ENCODE measurements at regions of chr17 and their contacts with region 1.

Region 1: DNA sequence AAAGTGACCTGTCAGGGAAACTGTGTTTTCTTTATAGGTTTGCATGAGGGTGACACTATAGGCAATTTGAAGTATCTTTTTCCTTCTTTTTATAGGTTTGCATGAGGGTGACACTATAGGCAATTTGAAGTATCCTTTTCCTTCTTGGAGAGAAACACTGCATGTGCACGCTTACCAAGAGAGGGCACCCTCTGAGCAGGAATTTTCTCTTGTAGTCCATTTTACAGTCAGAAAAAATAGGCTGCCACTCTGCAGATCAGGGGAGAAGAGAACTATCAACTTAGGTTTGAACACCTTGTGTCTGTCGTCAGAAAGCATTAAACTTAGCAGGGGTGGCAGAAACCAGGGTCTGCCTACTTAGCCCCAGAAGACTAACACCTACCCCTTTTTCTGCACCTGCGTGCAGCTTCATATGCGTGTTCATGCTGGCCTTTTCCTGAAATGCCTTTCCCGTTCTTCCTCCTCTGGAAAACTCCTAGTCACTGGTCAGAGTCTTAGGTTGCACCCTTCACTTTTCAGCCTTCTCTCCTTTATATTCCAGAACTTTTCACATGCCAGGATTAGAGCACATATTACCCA is 16.4 kb upstream of the SMIM36 start:
- DNase-seq: peak; percentile 71
- H3K4me3 ChIP-seq: no peak overlapping the region
- H3K27ac ChIP-seq: no peak overlapping the region
- H3K4me1 ChIP-seq: no peaks in the 10 kb centered on the region
- H3K27me3 ChIP-seq: peaks cover 0 to 3% of the 10 kb centered on the region in 2 experiments
- CTCF ChIP-seq: peak; percentile 48 to 69
- POLR2A ChIP-seq: no peak

Region 2: DNA sequence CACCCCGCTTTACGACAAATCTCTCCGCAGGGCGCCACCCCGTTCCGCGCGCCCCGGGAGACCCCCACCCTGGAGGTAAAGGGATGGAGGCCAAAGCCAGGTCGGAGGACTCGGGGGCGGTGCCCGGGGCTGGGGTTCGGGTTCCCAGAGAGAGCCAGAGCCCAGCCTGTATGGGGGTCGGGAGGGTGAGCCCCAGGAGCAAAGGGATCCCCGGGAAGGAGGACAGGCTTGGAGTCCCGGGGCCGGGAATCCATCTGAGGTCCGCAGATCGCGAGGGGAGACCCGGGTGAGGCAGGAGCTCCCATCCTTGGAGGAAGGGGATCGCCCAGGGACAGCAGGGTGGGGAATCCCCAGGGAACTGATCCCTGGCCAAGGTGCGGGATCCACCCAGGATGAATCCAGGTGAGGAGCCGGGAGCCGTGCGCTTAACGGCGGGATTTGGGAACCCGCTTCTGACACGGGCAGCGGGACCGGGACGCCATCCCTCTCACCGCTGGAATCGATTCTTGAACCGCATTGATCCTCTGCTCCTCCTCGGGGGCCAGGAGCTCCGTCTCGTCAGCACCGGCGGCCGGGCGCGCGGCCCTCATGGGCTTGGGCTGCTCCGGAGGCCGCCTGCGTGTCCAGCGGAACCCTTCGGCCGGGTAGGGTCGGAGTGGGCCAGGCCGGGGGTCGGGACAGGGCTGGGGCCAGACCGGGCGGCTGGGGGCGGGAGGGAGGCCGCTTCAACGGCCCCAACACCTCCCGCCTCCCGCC is 106.3 kb before region 1 on chr17 and contains the start of gene MMD:
- CTCF ChIA-PET with region 1: no interaction called
- POLR2A ChIA-PET with region 1: no interaction called
- dilution Hi-C with region 1: no loop called
- intact Hi-C with region 1: no loop called
- DNase-seq: no peak
- H3K4me3 ChIP-seq: peak within 1 kb of the TSS; percentile 89 to 97 (median 92)
- H3K27ac ChIP-seq: peak within 1 kb of the TSS; percentile 61
- H3K4me1 ChIP-seq: peaks cover 13% of the 10 kb centered on the region
- H3K27me3 ChIP-seq: peaks cover 8 to 28% of the 10 kb centered on the region in 2 experiments
- CTCF ChIP-seq: no peak
- POLR2A ChIP-seq: no peak
- total RNA-seq, gene MMD: 9.3 TPM in 2 replicates

Region 3: GRCh38 chr17:55641676-55642081 is 114.0 kb after region 1 on chr17:
- CTCF ChIA-PET with region 1: interaction called, 67 read pairs
- POLR2A ChIA-PET with region 1: no interaction called
- dilution Hi-C with region 1: no loop called
- intact Hi-C with region 1: loop called (anchors 1 kb)
- DNase-seq: peak; percentile 77
- H3K4me3 ChIP-seq: no peak overlapping the region
- H3K27ac ChIP-seq: no peak overlapping the region
- H3K4me1 ChIP-seq: no peaks in the 10 kb centered on the region
- H3K27me3 ChIP-seq: peaks cover 0 to 3% of the 10 kb centered on the region in 2 experiments
- CTCF ChIP-seq: peak; percentile 56 to 80
- POLR2A ChIP-seq: no peak

Region 4: GRCh38 chr17:55717898-55718735 is 190.5 kb after region 1 on chr17:
- CTCF ChIA-PET with region 1: interaction called, 24 read pairs
- POLR2A ChIA-PET with region 1: no interaction called
- dilution Hi-C with region 1: no loop called
- intact Hi-C with region 1: loop called (anchors 1 kb)
- DNase-seq: peak; percentile 72
- H3K4me3 ChIP-seq: no peak overlapping the region
- H3K27ac ChIP-seq: no peak overlapping the region
- H3K4me1 ChIP-seq: peaks cover 2% of the 10 kb centered on the region
- H3K27me3 ChIP-seq: peaks cover 0 to 4% of the 10 kb centered on the region in 2 experiments
- CTCF ChIP-seq: peak; percentile 60 to 66
- POLR2A ChIP-seq: no peak

Region 5: GRCh38 chr17:55735731-55736405 is 208.2 kb after region 1 on chr17:
- CTCF ChIA-PET with region 1: interaction called, 23 read pairs
- POLR2A ChIA-PET with region 1: no interaction called
- dilution Hi-C with region 1: no loop called
- intact Hi-C with region 1: no loop called
- DNase-seq: peak; percentile 32
- H3K4me3 ChIP-seq: no peak overlapping the region
- H3K27ac ChIP-seq: no peak overlapping the region
- H3K4me1 ChIP-seq: no peaks in the 10 kb centered on the region
- H3K27me3 ChIP-seq: no peaks in the 10 kb centered on the region
- CTCF ChIP-seq: peak; percentile 44 to 54
- POLR2A ChIP-seq: no peak

Region 6: DNA sequence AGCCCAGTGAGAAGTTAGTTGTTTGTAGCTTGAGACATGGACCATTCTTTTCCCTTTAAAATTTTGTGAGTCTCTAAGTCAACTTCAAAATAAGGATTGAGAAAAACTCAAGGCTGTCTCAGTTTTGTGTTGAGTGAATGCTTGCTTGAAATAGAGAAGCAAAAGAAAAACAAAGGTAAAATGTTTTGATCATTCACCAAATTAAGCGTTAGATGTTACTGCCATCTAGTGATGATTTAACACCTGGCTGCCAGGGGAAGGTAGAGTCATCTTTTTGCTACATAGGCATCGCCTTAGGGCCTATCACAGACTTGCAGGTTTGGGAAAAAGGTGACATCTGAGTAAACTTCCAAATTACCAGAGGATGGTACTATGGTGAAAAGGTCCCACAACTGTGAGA is 297.6 kb after region 1 on chr17:
- CTCF ChIA-PET with region 1: no interaction called
- POLR2A ChIA-PET with region 1: no interaction called
- dilution Hi-C with region 1: no loop called
- intact Hi-C with region 1: loop called (anchors 1 kb)
- DNase-seq: peak; percentile 8
- H3K4me3 ChIP-seq: no peak overlapping the region
- H3K27ac ChIP-seq: no peak overlapping the region
- H3K4me1 ChIP-seq: no peaks in the 10 kb centered on the region
- H3K27me3 ChIP-seq: no peaks in the 10 kb centered on the region
- CTCF ChIP-seq: peak; percentile 7 to 10
- POLR2A ChIP-seq: no peak

Region 7: DNA sequence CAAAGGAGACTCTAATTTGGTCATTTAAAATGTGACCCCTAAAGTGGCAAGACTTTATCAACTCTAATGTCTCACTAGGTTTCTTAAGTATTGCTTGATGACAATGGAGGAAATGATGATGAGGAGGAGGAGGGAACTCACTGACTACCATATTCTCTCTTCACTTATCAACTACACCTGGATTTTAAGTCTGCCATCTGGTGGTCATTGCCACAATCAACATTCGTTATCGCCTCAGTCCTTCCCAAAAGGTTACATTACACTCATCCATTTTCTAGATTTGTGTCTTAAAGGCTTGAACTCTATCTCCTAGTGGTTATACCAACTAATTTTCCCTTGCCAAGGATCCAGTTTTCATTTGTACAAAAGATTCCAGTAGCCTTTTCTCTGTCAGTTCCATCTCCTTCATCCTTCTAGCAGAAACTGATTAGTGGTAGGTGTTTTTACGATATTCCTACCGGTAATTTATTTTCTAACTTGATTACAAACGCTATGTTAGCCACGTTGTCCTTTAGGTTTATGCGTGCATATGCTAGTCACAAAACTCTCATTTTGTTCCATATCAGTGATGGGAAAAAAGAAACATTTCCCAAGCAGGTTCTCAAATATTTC is 951.3 kb after region 1 on chr17:
- CTCF ChIA-PET with region 1: no interaction called
- POLR2A ChIA-PET with region 1: no interaction called
- dilution Hi-C with region 1: no loop called
- intact Hi-C with region 1: loop called (anchors 1 kb)
- DNase-seq: peak; percentile 44
- H3K4me3 ChIP-seq: no peak overlapping the region
- H3K27ac ChIP-seq: no peak overlapping the region
- H3K4me1 ChIP-seq: no peaks in the 10 kb centered on the region
- H3K27me3 ChIP-seq: peaks cover 0 to 7% of the 10 kb centered on the region in 2 experiments
- CTCF ChIP-seq: peak; percentile 30 to 52
- POLR2A ChIP-seq: no peak

Measured in endothelial cell of umbilical vein (primary cell).